A549 (cell line): ENCODE measurements at regions of chr1 and their contacts with region 1.

Region 1: GRCh38 chr1:85707990-85708828 is at the start of gene ZNHIT6:
- DNase-seq: peak; percentile 81 to 98
- ATAC-seq: peak; percentile 99 to 100
- H3K4me3 ChIP-seq: peak within 1 kb of the TSS; percentile 99
- H3K27ac ChIP-seq: peak within 1 kb of the TSS; percentile 90 to 96
- H3K4me1 ChIP-seq: peaks cover 8% of the 10 kb centered on the region
- CTCF ChIP-seq: no peak
- EP300 ChIP-seq: no peak
- POLR2A ChIP-seq: peak; percentile 54
- RAD21 ChIP-seq: peak in 1 of 2 experiments; percentile 45; a peak in 3 of 5 replicates
- polyA plus RNA-seq, gene ZNHIT6: 20.3 and 21.2 TPM in 2 replicates

Region 2: GRCh38 chr1:85718678-85719340 is 10.6 kb after region 1 on chr1:
- CTCF ChIA-PET with region 1: interaction called, 11 read pairs
- POLR2A ChIA-PET with region 1: no interaction called
- DNase-seq: no peak
- ATAC-seq: no peak
- H3K4me3 ChIP-seq: no peak overlapping the region
- H3K27ac ChIP-seq: no peak overlapping the region
- H3K4me1 ChIP-seq: no peaks in the 10 kb centered on the region
- CTCF ChIP-seq: no peak
- EP300 ChIP-seq: no peak
- POLR2A ChIP-seq: no peak
- RAD21 ChIP-seq: no peak